ENCODE measurements at regions of chr12 and their contacts with region 1.

Region 1: GRCh38 chr12:68451261-68452077 is 119.3 kb upstream of the MDM1 start:
- DNase-seq: peak in 4 of 5 donors; percentile 16 to 47 (median 26)
- ATAC-seq: peak in 3 of 4 donors; percentile 35 to 69 (median 63)
- H3K4me3 ChIP-seq: peak overlapping the region in 6 of 12 donors; percentile 1 to 32 (median 18)
- H3K27ac ChIP-seq: peak overlapping the region in 7 of 12 donors; percentile 15 to 68 (median 52)
- H3K4me1 ChIP-seq: peaks cover 0 to 68% (median 43%) of the 10 kb centered on the region in 12 donors
- H3K27me3 ChIP-seq: no peaks in the 10 kb centered on the region
- CTCF ChIP-seq: no peak
- POLR2A ChIP-seq: no peak

Region 2: GRCh38 chr12:68358532-68359485 is 92.7 kb before region 1 on chr12:
- intact Hi-C with region 1: loop called in 3 of 10 experiments (anchors 5 to 10 kb)
- DNase-seq: peak in 3 of 5 donors; percentile 46 to 64 (median 58)
- ATAC-seq: peak; percentile 57 to 94 (median 80)
- H3K4me3 ChIP-seq: no peak overlapping the region
- H3K27ac ChIP-seq: peak overlapping the region in 4 of 12 donors; percentile 20 to 50 (median 44)
- H3K4me1 ChIP-seq: peaks cover 0 to 20% (median 6%) of the 10 kb centered on the region in 12 donors
- H3K27me3 ChIP-seq: no peaks in the 10 kb centered on the region
- CTCF ChIP-seq: peak; percentile 54 to 82 (median 70)
- POLR2A ChIP-seq: no peak

Region 3: GRCh38 chr12:68406134-68406594 is 45.3 kb before region 1 on chr12:
- intact Hi-C with region 1: loop called in 4 of 10 experiments (anchors 5 to 10 kb)
- DNase-seq: peak; percentile 93 to 96 (median 95)
- ATAC-seq: peak; percentile 94 to 99 (median 99)
- H3K4me3 ChIP-seq: peak overlapping the region in 1 of 12 donors; percentile 26
- H3K27ac ChIP-seq: peak overlapping the region; percentile 45 to 87 (median 74)
- H3K4me1 ChIP-seq: peaks cover 5 to 32% (median 24%) of the 10 kb centered on the region in 12 donors
- H3K27me3 ChIP-seq: no peaks in the 10 kb centered on the region
- CTCF ChIP-seq: peak in 10 of 12 donors; percentile 27 to 65 (median 46)
- POLR2A ChIP-seq: peak in 1 of 2 donors; percentile 0

Region 4: GRCh38 chr12:68530965-68531364 is 79.5 kb after region 1 on chr12:
- intact Hi-C with region 1: loop called in 1 of 10 experiments (anchors 5 kb)
- DNase-seq: peak in 3 of 5 donors; percentile 25 to 37 (median 31)
- ATAC-seq: peak in 3 of 4 donors; percentile 55 to 61 (median 59)
- H3K4me3 ChIP-seq: no peak overlapping the region
- H3K27ac ChIP-seq: peak overlapping the region in 6 of 12 donors; percentile 28 to 52 (median 40)
- H3K4me1 ChIP-seq: peaks cover 0 to 26% (median 0%) of the 10 kb centered on the region in 12 donors
- H3K27me3 ChIP-seq: no peaks in the 10 kb centered on the region
- CTCF ChIP-seq: no peak
- POLR2A ChIP-seq: no peak